MCF 10A (cell line): ENCODE measurements at regions of chr3 and their contacts with region 1.

Region 1: GRCh38 chr3:56042326-56042951 is 425.8 kb downstream of the ERC2 start:
- DNase-seq: peak; percentile 61
- H3K4me3 Mint-ChIP-seq: no peak overlapping the region
- H3K27ac Mint-ChIP-seq: no peak overlapping the region
- H3K4me1 Mint-ChIP-seq: no peaks in the 10 kb centered on the region
- H3K27me3 Mint-ChIP-seq: peaks cover 41% of the 10 kb centered on the region
- CTCF ChIP-seq: peak; percentile 44

Region 2: DNA sequence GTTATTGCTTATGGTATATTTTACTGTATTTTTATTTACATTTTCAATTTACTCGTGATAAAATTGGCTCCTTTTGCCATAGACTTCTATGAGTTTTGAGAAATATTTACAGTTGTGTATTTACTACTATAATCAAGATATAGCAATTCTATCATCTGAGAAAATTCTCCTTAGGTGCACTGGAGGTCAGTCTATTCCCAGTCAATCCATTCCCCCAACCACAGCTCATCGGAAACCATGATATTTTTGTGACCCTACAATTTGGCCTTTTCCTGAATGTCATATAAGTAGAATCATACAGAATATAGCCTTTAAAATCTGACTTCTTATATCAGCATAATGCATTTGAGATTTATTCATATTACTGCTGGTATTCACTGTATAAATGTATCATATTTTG is 999.8 kb before region 1 on chr3:
- CTCF ChIA-PET with region 1: no interaction called
- POLR2A ChIA-PET with region 1: no interaction called
- intact Hi-C with region 1: loop called (anchors 2 kb)
- DNase-seq: peak; percentile 26
- H3K4me3 Mint-ChIP-seq: no peak overlapping the region
- H3K27ac Mint-ChIP-seq: no peak overlapping the region
- H3K4me1 Mint-ChIP-seq: no peaks in the 10 kb centered on the region
- H3K27me3 Mint-ChIP-seq: no peaks in the 10 kb centered on the region
- CTCF ChIP-seq: peak; percentile 30

Region 3: GRCh38 chr3:56025326-56025725 is 17.1 kb before region 1 on chr3:
- CTCF ChIA-PET with region 1: interaction called, 11 read pairs
- POLR2A ChIA-PET with region 1: no interaction called
- intact Hi-C with region 1: no loop called
- DNase-seq: peak; percentile 34
- H3K4me3 Mint-ChIP-seq: no peak overlapping the region
- H3K27ac Mint-ChIP-seq: no peak overlapping the region
- H3K4me1 Mint-ChIP-seq: no peaks in the 10 kb centered on the region
- H3K27me3 Mint-ChIP-seq: no peaks in the 10 kb centered on the region
- CTCF ChIP-seq: no peak